Caco-2 (cell line): ENCODE measurements at regions of chr11 and their contacts with region 1.

Region 1: DNA sequence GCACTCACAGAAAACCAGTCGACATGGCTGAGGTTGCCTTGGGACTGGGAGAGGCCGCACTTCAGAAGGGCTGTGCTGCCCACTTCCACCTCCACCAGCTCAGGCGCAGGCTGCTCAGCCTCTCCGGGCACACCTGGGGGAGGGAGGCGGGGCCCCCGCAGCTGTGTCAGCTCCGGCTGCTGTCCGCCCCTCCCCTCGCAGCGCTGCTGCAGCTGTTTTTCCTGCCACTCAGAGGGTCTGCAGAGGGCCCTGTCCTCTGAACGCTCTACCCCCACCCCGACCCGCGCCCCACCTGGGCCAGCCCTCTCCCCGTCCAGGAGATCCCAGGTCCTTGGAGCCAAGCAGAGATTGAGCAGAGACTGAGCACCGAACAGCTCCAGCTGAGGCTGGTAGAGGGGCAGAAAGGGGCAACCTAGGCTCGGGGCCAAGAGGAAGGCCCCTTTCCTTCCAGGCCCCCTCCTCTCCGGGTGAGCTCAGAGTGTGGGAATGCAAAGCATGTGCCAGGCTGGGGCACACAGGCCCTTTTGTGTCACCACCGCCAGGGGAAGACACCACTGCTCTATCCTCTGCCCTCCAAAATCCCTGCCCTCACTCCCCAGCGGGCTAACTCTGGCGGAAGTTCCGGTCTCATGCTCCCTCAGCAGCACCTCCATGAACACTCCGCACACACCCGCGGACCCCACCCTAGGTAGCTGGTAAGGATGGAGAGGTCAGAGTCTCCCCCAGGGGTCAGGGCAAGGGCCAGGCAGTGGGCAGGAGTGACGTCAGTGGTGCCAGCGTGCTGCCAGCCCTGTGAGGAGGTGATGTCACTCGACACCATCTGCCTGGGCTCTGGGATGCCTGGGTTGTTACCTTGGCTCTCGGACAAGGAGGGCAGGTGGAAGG is 1.6 kb downstream of the MCAM start:
- DNase-seq: peak; percentile 53 to 58
- H3K4me3 ChIP-seq: peak overlapping the region; percentile 8; the same call in 1 of the 2 replicates
- H3K4me3 Mint-ChIP-seq: peak overlapping the region; percentile 76
- H3K27ac Mint-ChIP-seq: no peak overlapping the region
- H3K4me1 ChIP-seq: peaks cover 23% of the 10 kb centered on the region
- H3K4me1 Mint-ChIP-seq: no peaks in the 10 kb centered on the region
- H3K27me3 ChIP-seq: peaks cover 7% of the 10 kb centered on the region
- H3K27me3 Mint-ChIP-seq: peaks cover 5% of the 10 kb centered on the region
- CTCF ChIP-seq: peak in 1 of 2 experiments; percentile 21

Region 2: DNA sequence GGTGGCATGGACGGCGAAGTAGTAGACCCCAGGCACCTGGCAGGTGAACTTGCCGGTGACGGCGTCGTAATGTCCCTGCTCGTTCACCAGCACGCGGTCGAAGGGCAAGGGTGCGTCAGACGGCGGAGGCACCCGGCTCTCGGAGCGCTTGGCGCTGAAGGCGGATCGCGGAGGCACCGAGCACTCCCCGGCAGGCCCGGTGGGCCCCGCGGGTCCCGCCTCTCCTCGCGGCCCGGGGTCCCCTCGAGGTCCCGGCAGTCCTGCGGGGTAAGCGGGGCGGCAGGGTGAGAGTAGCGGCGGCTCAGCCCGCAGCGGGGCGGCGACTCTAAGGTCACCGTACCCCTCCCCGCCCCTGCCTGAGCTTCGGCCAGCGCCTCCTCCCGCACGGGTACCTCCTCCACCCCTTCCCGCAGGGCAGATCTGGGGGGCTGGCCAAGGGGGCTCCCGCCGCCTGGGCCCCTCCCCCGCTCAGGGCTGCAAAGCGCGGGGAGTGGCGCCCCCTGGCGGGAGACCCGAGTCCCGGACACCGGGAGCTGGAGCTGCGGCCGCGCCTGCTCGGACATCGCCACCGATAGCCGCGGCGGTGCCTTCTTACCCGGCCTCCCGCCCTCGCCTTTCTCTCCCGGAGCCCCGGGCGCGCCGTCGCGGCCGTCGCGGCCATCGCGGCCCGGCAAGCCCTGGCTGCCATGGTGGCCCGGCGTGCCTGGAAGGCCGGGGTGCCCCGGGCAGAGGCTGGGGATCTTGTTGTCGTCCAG is 24.4 kb after region 1 on chr11:
- CTCF ChIA-PET with region 1: interaction called, 51 read pairs
- POLR2A ChIA-PET with region 1: interaction called, 3 read pairs
- intact Hi-C with region 1: no loop called
- DNase-seq: peak in 1 of 2 experiments; percentile 89
- H3K4me3 ChIP-seq: peak overlapping the region; percentile 45
- H3K4me3 Mint-ChIP-seq: peak overlapping the region; percentile 69
- H3K27ac Mint-ChIP-seq: no peak overlapping the region
- H3K4me1 ChIP-seq: peaks cover 37% of the 10 kb centered on the region
- H3K4me1 Mint-ChIP-seq: peaks cover 29% of the 10 kb centered on the region
- H3K27me3 ChIP-seq: no peaks in the 10 kb centered on the region; the same call in 1 of the 2 replicates
- H3K27me3 Mint-ChIP-seq: peaks cover 3% of the 10 kb centered on the region
- CTCF ChIP-seq: peak; percentile 93 to 99